Activated T-helper 1 cell treated with anti-CD3 and anti-CD28 coated beads, Interleukin-12 subunit alpha, Interleukin-12 subunit beta, Interleukin-2, Interleukin-4 antibody, amounts not matched to agents 30 ng/mL and 10 ng/mL and 1 ng/mL, durations not matched to agents 14 hours and 24 hours and 36 hours (primary cell): ENCODE measurements at regions of chr5 and their contacts with region 1.

Region 1: GRCh38 chr5:93582677-93583438 is at the start of gene NR2F1:
- DNase-seq: no peak
- H3K4me3 Mint-ChIP-seq: no peak within 1 kb of the TSS
- H3K27ac Mint-ChIP-seq: peak within 1 kb of the TSS; percentile 76
- H3K4me1 Mint-ChIP-seq: peaks cover 19% of the 10 kb centered on the region
- H3K27me3 Mint-ChIP-seq: peaks cover 53% of the 10 kb centered on the region
- total RNA-seq, gene NR2F1: not detected in 2 replicates

Region 2: DNA sequence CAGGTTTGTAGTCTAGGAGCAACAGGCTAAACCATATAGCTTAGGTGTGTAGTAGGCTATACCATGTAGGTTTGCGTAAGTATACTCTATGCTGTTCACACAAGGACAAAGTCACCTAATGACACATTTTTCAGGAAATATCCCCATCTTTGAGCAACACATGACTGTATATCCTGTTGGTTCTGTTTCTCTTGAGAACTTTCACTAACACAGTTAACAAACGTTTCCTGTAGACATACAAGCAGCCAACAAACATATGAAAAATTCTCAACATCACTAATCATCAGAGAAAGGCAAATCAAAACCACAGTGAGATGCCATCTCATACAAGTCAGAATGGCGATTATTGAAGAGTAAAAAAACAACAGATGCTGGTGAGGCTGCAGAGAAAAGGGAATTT is 70.1 kb before region 1 on chr5:
- intact Hi-C with region 1: no loop called
- DNase-seq: no peak
- H3K4me3 Mint-ChIP-seq: no peak overlapping the region
- H3K27ac Mint-ChIP-seq: no peak overlapping the region
- H3K4me1 Mint-ChIP-seq: no peaks in the 10 kb centered on the region
- H3K27me3 Mint-ChIP-seq: no peaks in the 10 kb centered on the region

Region 3: GRCh38 chr5:93570294-93571113 is 12.4 kb before region 1 on chr5:
- intact Hi-C with region 1: loop called (anchors 1 kb)
- DNase-seq: no peak
- H3K4me3 Mint-ChIP-seq: no peak overlapping the region
- H3K27ac Mint-ChIP-seq: no peak overlapping the region
- H3K4me1 Mint-ChIP-seq: no peaks in the 10 kb centered on the region
- H3K27me3 Mint-ChIP-seq: peaks cover 74% of the 10 kb centered on the region

Region 4: GRCh38 chr5:93800988-93801811 is 218.3 kb after region 1 on chr5:
- intact Hi-C with region 1: loop called (anchors 1 kb)
- DNase-seq: no peak
- H3K4me3 Mint-ChIP-seq: no peak overlapping the region
- H3K27ac Mint-ChIP-seq: no peak overlapping the region
- H3K4me1 Mint-ChIP-seq: peaks cover 4% of the 10 kb centered on the region
- H3K27me3 Mint-ChIP-seq: peaks cover 2% of the 10 kb centered on the region

Region 5: GRCh38 chr5:93915142-93915553 is 332.3 kb after region 1 on chr5:
- intact Hi-C with region 1: loop called (anchors 1 kb)
- DNase-seq: no peak
- H3K4me3 Mint-ChIP-seq: no peak overlapping the region
- H3K27ac Mint-ChIP-seq: no peak overlapping the region
- H3K4me1 Mint-ChIP-seq: no peaks in the 10 kb centered on the region
- H3K27me3 Mint-ChIP-seq: no peaks in the 10 kb centered on the region

Region 6: GRCh38 chr5:95283761-95284415 is 1701.0 kb after region 1 on chr5:
- intact Hi-C with region 1: loop called (anchors 10 kb)
- DNase-seq: peak; percentile 1
- H3K4me3 Mint-ChIP-seq: no peak overlapping the region
- H3K27ac Mint-ChIP-seq: no peak overlapping the region
- H3K4me1 Mint-ChIP-seq: peaks cover 11% of the 10 kb centered on the region
- H3K27me3 Mint-ChIP-seq: peaks cover 59% of the 10 kb centered on the region